ENCODE measurements at regions of chr2 and their contacts with region 1.

Region 1: DNA sequence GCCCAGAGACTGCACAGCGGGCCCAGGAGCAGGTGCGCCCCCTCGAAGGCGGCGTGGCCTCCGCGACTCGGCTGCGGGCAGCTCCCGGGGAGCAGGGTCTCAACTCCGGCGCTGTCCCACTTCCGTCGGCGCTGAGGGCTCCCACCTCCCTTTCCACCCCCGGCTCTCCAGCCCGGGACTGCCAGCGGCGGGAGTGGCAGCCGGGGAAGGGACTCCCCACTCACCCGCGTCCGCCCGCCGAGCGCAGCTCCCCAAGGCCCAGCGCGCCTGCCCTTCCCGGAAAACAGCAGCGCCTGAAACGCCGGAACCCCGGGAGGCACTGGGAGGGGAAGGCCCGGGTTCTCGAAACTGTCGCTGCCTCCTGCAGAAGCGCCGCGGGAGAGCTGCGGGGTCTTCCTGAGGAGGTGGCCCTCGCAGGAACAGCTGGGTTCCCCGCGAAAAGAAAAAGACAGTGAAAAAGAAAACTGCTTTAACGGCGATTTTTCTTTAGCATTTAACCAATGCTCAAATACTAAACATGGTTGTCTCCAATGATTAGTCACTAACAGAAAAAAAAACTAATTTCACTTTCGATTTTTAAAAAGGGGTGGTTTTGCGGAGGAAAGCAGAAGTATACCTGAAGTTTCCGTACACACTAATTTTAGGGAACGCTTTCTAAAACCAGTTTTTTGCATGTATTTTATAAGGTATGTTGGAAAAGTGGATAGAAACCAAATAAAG is at the start of gene NMI:
- DNase-seq: peak; percentile 74
- H3K4me3 Mint-ChIP-seq: peak within 1 kb of the TSS; percentile 88
- H3K27ac Mint-ChIP-seq: peak within 1 kb of the TSS; percentile 98
- H3K4me1 Mint-ChIP-seq: peaks cover 44% of the 10 kb centered on the region
- H3K27me3 Mint-ChIP-seq: peaks cover 8% of the 10 kb centered on the region
- total RNA-seq, gene NMI: 36.8 and 40.1 TPM in 2 replicates

Region 2: DNA sequence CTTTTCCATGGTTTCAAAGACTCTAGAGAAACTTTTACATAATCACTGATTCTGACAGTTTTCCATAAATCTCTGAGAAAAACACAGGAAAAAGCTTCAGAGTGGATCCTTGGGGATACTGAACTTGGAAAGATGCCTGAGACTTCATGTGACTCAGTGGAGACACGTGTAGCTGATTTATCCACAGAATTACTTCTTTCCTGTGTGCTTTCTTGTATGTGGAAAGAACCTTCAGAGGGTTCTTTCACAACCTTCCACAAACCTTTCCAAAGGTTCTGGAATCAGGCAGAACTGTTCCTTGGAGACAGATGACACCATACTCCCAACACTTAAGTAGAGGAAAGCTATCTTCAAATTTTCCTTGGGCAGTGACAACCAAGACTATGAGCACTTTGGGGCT is 1009.3 kb before region 1 on chr2:
- intact Hi-C with region 1: no loop called
- DNase-seq: no peak
- H3K4me3 Mint-ChIP-seq: no peak overlapping the region
- H3K27ac Mint-ChIP-seq: no peak overlapping the region
- H3K4me1 Mint-ChIP-seq: no peaks in the 10 kb centered on the region
- H3K27me3 Mint-ChIP-seq: no peaks in the 10 kb centered on the region

Region 3: DNA sequence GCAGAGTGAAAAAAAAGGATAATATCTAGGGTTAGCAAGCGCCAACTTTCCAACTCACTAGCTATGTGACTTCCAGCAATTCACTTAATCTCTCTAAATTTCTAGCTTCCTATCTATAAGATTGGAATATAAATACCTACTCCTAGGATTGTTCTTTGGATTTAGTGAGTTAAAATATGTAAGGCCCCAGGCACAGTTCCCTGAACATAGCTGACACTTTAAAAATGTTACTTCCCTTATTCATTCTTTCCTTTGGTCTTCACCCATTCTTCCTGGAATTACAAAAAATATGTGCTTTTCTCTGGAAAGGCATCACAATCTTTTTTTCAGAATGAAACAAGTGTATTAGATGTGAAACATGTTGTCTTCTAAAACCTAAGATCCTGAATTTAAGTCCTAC is 393.6 kb before region 1 on chr2:
- intact Hi-C with region 1: no loop called
- DNase-seq: no peak
- H3K4me3 Mint-ChIP-seq: no peak overlapping the region
- H3K27ac Mint-ChIP-seq: no peak overlapping the region
- H3K4me1 Mint-ChIP-seq: no peaks in the 10 kb centered on the region
- H3K27me3 Mint-ChIP-seq: peaks cover 2% of the 10 kb centered on the region

Region 4: DNA sequence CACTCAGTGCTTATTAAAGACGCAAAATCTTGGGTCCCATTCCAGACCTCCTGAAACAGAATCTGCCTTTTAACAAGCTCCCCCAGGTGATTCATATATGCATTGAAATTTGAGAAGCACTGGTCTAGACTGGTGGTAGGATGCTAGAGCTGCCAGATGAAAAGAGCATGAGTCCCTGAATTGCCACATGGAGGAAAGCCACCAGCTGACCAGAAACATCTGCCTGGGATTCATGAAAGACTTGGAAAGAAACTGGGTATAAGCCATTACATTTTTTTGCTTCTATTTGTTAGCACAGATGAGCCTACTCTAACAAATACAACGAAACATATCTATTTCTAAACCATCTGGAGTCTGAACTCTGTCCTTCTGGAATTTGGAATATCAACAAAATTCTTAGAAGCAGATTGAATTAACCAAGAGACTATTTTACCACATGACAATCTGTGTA is 256.8 kb before region 1 on chr2:
- intact Hi-C with region 1: no loop called
- DNase-seq: no peak
- H3K4me3 Mint-ChIP-seq: no peak overlapping the region
- H3K27ac Mint-ChIP-seq: no peak overlapping the region
- H3K4me1 Mint-ChIP-seq: peaks cover 7% of the 10 kb centered on the region
- H3K27me3 Mint-ChIP-seq: peaks cover 7% of the 10 kb centered on the region

Region 5: GRCh38 chr2:151217343-151217742 is 72.2 kb before region 1 on chr2:
- intact Hi-C with region 1: no loop called
- DNase-seq: no peak
- H3K4me3 Mint-ChIP-seq: no peak overlapping the region
- H3K27ac Mint-ChIP-seq: no peak overlapping the region
- H3K4me1 Mint-ChIP-seq: no peaks in the 10 kb centered on the region
- H3K27me3 Mint-ChIP-seq: peaks cover 10% of the 10 kb centered on the region

Region 6: DNA sequence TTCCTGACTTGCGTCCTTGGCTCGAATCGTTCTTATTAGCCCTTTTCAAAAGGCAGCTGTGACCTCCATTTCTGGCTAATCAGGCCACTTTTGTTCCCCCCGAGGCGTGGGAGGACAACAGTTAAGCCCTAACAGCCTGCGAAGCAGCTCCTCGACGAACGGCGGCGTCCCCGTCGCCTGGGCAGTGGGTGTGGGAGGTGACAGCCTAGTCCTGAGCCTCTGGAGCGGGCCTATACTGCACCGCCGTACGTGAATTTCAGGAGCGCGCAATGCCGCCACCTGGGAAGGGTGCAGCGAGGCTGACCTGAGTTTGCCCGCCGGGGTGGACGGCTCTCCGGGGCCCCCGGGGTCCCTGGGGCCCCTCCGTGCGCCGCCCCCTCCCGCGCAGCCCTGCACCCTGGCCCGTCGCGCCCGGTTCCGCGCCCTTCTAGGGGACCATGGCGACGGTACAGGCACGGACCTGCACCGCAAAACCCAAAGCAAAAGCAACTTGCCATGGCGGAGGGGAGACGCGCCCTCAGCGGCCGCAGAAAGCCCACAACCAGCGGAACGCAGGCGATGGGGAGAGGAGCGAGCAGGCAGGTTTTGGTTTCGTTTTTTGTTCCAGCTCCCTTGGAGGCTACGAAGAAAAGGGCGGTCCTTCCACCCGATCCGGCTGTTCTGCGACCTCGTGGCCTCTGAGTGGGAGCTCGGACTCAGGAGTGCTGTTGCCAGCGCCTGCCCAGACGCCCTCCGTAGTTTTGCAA is 28.1 kb before region 1 on chr2 and contains the start of gene RBM43:
- intact Hi-C with region 1: loop called (anchors 1 kb)
- DNase-seq: peak; percentile 85
- H3K4me3 Mint-ChIP-seq: peak within 1 kb of the TSS; percentile 93
- H3K27ac Mint-ChIP-seq: peak within 1 kb of the TSS; percentile 98
- H3K4me1 Mint-ChIP-seq: peaks cover 18% of the 10 kb centered on the region
- H3K27me3 Mint-ChIP-seq: peaks cover 2% of the 10 kb centered on the region
- total RNA-seq, gene RBM43: 1.9 and 2.9 TPM in 2 replicates

Region 7: GRCh38 chr2:151409601-151410484 is 120.3 kb after region 1 on chr2 and contains the start of gene RIF1:
- intact Hi-C with region 1: loop called (anchors 1 kb)
- DNase-seq: peak; percentile 68
- H3K4me3 Mint-ChIP-seq: peak within 1 kb of the TSS; percentile 95
- H3K27ac Mint-ChIP-seq: peak within 1 kb of the TSS; percentile 92
- H3K4me1 Mint-ChIP-seq: peaks cover 20% of the 10 kb centered on the region
- H3K27me3 Mint-ChIP-seq: peaks cover 3% of the 10 kb centered on the region
- total RNA-seq, gene RIF1: 82.4 and 82.7 TPM in 2 replicates

Region 8: DNA sequence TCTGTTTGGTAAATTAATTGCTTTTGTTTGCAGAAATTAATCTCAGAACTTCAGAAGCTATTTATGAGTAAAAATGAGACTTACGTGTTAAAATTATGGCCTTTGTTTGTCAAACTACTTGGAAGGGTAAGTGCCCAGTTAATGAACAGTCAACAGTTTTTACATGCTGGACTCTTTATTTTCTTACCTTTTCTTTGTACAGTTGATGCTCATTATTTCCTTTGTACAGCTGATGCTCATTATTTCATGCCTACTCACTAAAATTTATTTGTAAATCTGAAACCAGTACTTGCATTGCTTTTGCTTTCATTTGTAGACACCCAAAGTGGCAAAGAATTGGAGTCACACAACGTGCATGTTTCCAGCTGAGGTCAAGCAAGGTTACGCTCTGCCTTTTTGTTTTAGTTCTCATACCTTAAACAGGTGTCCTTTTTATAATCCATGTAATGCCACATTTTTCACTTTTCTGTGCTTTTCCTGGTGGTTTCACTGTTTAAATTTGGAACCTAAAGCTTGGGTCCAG is 133.4 kb after region 1 on chr2:
- intact Hi-C with region 1: loop called (anchors 1 kb)
- DNase-seq: no peak
- H3K4me3 Mint-ChIP-seq: no peak overlapping the region
- H3K27ac Mint-ChIP-seq: peak overlapping the region; percentile 74
- H3K4me1 Mint-ChIP-seq: peaks cover 29% of the 10 kb centered on the region
- H3K27me3 Mint-ChIP-seq: no peaks in the 10 kb centered on the region

Region 9: GRCh38 chr2:151481744-151482143 is 192.2 kb after region 1 on chr2:
- intact Hi-C with region 1: loop called (anchors 1 kb)
- DNase-seq: no peak
- H3K4me3 Mint-ChIP-seq: no peak overlapping the region
- H3K27ac Mint-ChIP-seq: peak overlapping the region; percentile 65
- H3K4me1 Mint-ChIP-seq: peaks cover 35% of the 10 kb centered on the region
- H3K27me3 Mint-ChIP-seq: no peaks in the 10 kb centered on the region